ENCODE measurements at regions of chr1 and their contacts with region 1.

Region 1: DNA sequence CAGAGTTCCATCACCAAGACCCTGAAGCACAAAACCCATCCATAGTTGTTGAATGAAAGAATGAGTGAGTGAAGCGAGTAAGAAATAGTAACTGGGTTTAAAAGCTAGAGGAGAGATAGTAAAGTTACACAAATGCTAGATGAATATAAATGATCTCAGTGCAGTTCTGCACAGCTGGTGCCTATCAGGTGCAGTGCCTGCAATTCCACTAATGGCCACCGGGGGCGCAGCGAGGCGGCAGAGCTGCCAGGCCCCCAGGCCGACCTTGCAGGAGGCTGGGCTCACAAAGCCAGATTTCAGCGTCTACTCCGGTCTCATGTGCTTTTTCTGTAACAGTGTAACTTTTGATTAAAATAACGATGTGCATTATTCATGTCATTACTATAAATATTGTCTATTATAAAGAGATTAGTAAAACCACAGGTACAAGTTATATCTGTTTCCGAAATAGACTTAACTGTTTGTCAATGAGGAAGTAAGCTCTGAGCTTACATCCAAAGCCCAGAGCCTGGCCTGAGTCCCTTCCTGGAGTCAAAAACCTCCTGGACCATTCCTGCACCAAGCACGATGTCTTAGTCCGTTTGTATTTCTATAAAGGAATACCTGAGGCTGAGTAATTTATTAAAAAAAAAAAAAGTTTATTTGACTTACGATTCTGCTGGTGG is 477.6 kb downstream of the NPHP4 start:
- DNase-seq: peak; percentile 84
- ATAC-seq: peak; percentile 48

Region 2: GRCh38 chr1:5329068-5329739 is 185.4 kb before region 1 on chr1:
- intact Hi-C with region 1: no loop called
- DNase-seq: no peak
- ATAC-seq: no peak

Region 3: GRCh38 chr1:5502311-5503194 is 12.1 kb before region 1 on chr1:
- intact Hi-C with region 1: no loop called
- DNase-seq: no peak
- ATAC-seq: no peak

Region 4: GRCh38 chr1:5745776-5746610 is 231.3 kb after region 1 on chr1:
- intact Hi-C with region 1: loop called (anchors 2 kb)
- DNase-seq: no peak
- ATAC-seq: peak; percentile 80

Region 5: GRCh38 chr1:5888606-5889211 is 374.1 kb after region 1 on chr1:
- intact Hi-C with region 1: no loop called
- DNase-seq: no peak
- ATAC-seq: no peak

Region 6: DNA sequence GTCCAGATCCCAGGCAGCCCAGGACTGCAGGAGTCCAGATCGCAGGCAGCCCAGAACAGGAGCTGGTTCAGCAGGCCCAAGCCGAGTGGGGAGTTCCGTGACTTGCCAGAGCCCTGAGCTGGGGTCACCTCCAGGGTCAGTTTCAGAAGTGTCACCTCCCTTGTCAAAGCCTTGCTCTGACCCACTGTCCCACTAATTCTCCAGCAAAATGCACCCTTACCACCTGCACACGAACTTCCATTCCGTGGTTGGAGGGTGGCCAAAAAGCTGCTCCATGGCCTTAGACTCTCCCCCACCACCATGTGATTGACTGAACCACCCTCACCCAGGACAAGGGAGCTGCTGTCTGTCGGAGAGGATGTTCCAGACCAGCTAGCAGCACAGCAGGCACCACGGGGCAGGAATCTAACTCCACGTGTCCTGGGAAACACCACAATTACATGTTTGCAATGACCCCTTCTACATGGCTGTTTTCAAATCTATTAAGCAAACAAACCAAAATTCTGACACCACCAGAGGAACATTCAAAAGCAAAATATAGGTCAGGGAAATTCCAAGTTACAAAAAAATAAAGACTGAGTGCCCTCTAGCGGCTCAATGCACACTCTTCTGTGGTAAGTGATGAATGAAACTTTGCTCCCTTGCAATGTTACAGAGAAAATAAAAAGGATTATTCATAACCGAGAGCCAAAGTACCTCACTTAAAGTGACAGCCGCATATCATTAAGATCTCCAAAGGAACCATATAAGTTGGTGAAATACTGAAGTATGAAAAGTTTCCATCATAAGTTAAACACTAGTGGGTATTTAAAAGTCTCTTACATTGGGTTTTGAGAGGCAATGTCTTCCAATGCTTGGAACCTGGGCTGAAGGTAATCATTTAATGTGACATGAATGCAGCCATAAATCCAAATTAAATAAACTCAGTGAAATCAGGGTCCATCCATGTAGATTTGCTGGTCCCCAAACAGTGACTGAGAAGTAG is 401.2 kb after region 1 on chr1:
- intact Hi-C with region 1: loop called (anchors 5 kb)
- DNase-seq: no peak
- ATAC-seq: no peak

Region 7: GRCh38 chr1:5975133-5975880 is 460.7 kb after region 1 on chr1:
- intact Hi-C with region 1: loop called (anchors 5 kb)
- DNase-seq: peak; percentile 79
- ATAC-seq: peak; percentile 73

Measured in Right ventricle myocardium inferior (tissue), 1 donor.